GM12878 (cell line): ENCODE measurements at regions of chr2 and their contacts with region 1.

Region 1: GRCh38 chr2:203225423-203226039 is 13.3 kb upstream of the CYP20A1 start:
- DNase-seq: no peak
- ATAC-seq: peak; percentile 92
- H3K4me3 ChIP-seq: no peak overlapping the region
- H3K27ac ChIP-seq: no peak overlapping the region
- H3K4me1 ChIP-seq: no peaks in the 10 kb centered on the region
- H3K27me3 ChIP-seq: no peaks in the 10 kb centered on the region
- CTCF ChIP-seq: peak; percentile 42 to 76 (median 69)
- EP300 ChIP-seq: no peak
- POLR2A ChIP-seq: no peak
- RAD21 ChIP-seq: peak; percentile 59

Region 2: DNA sequence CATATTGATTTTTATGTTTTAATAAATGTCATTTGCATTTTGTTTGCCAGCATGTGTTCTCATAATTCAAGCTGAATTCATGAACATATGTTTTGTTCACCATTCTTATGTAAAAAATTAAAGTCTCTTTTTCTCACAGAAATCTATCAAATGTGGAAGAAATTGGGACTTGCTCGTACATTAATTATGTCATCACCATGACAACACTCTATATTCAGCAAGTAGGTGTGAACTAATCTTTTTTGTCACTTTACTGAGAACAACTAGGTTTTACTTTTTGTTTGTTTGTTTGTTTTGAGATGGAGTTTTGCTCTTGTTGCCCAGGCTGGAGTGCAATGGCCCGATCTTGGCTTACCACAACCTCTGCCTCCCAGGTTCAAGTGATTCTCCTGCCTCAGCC is 169.2 kb before region 1 on chr2:
- CTCF ChIA-PET with region 1: no interaction called
- POLR2A ChIA-PET with region 1: no interaction called
- RAD21 ChIA-PET with region 1: no interaction called
- SMC1A ChIA-PET with region 1: no interaction called
- in situ Hi-C with region 1: no loop called
- intact Hi-C with region 1: no loop called
- DNase-seq: no peak
- ATAC-seq: no peak
- H3K4me3 ChIP-seq: no peak overlapping the region
- H3K27ac ChIP-seq: no peak overlapping the region
- H3K4me1 ChIP-seq: no peaks in the 10 kb centered on the region
- H3K27me3 ChIP-seq: no peaks in the 10 kb centered on the region
- CTCF ChIP-seq: no peak
- EP300 ChIP-seq: no peak
- POLR2A ChIP-seq: no peak
- RAD21 ChIP-seq: no peak

Region 3: GRCh38 chr2:203164311-203164935 is 61.1 kb before region 1 on chr2:
- CTCF ChIA-PET with region 1: no interaction called
- POLR2A ChIA-PET with region 1: no interaction called
- RAD21 ChIA-PET with region 1: no interaction called
- SMC1A ChIA-PET with region 1: no interaction called
- in situ Hi-C with region 1: no loop called
- intact Hi-C with region 1: no loop called
- DNase-seq: no peak
- ATAC-seq: no peak
- H3K4me3 ChIP-seq: no peak overlapping the region
- H3K27ac ChIP-seq: no peak overlapping the region
- H3K4me1 ChIP-seq: no peaks in the 10 kb centered on the region
- H3K27me3 ChIP-seq: no peaks in the 10 kb centered on the region
- CTCF ChIP-seq: no peak
- EP300 ChIP-seq: no peak
- POLR2A ChIP-seq: no peak
- RAD21 ChIP-seq: no peak

Region 4: DNA sequence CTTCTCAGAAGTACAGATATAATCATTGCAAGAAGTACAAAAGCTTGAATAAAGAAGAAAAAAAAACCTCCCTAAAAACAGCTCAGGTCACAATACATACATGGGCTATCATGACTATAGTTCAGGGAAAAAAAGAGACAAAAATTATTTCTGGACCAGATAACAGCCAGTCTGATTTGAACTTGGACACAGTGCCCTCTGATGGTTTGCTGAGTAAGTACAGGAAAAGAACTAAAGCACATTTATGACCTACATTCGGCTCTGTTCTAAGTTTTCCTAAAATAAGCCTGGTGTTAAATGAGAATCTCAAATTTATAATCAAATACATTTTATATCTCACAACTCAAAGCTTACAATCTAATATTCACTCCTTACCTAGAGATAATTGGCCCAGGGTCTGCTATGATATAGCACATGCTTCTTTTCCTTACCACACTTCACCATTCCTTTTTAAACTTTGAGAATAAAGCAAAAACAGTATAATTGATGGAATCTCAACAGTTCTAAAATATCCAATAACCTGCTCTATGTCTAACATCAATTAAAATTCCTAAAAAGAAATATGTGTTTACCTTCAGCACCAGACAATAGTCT is 228.4 kb after region 1 on chr2:
- CTCF ChIA-PET with region 1: interaction called, 69 read pairs
- POLR2A ChIA-PET with region 1: interaction called, 5 read pairs
- RAD21 ChIA-PET with region 1: interaction called, 3 read pairs
- SMC1A ChIA-PET with region 1: interaction called, 20 read pairs
- in situ Hi-C with region 1: no loop called
- intact Hi-C with region 1: loop called (anchors 1 kb)
- DNase-seq: peak; percentile 4
- ATAC-seq: peak; percentile 86
- H3K4me3 ChIP-seq: no peak overlapping the region
- H3K27ac ChIP-seq: no peak overlapping the region
- H3K4me1 ChIP-seq: no peaks in the 10 kb centered on the region
- H3K27me3 ChIP-seq: no peaks in the 10 kb centered on the region
- CTCF ChIP-seq: peak; percentile 67 to 80 (median 73); a peak in 5 of 6 replicates
- EP300 ChIP-seq: no peak
- POLR2A ChIP-seq: no peak
- RAD21 ChIP-seq: peak; percentile 89

Region 5: DNA sequence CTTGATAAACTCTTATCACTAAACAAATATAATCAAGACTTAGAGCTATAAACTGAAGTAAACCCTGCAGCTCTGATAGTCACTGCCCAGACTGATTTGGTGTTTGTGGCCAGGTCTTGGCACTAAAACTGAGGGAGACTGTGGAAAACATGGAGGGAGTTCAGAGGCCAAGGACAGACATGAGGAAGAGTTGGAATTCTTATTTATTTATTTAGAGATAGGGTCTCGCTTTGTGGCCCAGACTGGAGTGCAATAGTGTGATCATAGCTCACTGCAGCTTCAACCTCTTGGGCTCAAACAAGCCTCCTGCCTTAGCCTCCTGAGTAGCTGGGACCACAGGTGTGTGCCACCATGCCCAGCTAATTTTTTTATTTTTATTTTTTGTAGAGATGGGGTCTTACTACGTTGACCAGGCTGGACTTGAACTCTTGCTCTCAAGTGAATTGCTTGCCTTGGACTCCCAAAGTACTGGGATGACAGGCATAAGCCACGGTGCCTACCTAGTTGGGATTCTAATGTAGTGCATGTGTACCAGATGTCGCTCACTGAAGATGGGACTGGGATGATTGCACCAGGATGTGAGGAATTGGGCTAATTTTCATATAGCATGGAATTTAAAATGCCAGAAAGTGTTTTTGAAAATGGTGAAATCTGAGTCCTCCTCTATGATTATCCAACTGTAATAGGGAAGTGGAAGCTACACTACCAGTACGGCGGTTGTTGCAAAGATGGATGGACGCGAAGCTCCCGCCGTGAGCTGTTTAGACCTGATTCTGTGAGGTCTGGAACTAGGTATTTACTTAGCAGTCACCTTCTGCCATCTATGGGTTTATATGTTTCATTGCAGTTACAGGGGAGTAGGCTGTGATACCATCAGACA is 589.4 kb after region 1 on chr2:
- CTCF ChIA-PET with region 1: interaction called, 8 read pairs
- POLR2A ChIA-PET with region 1: no interaction called
- RAD21 ChIA-PET with region 1: interaction called, 9 read pairs
- SMC1A ChIA-PET with region 1: no interaction called
- in situ Hi-C with region 1: loop called (anchors 25 kb)
- intact Hi-C with region 1: loop called (anchors 1 kb)
- DNase-seq: no peak
- ATAC-seq: peak; percentile 91
- H3K4me3 ChIP-seq: no peak overlapping the region
- H3K27ac ChIP-seq: no peak overlapping the region
- H3K4me1 ChIP-seq: peaks cover 6% of the 10 kb centered on the region
- H3K27me3 ChIP-seq: peaks cover 0 to under 1% of the 10 kb centered on the region in 2 experiments; a peak in 1 of 4 replicates
- CTCF ChIP-seq: peak; percentile 55 to 80 (median 66); a peak in 5 of 6 replicates
- EP300 ChIP-seq: no peak
- POLR2A ChIP-seq: no peak
- RAD21 ChIP-seq: peak; percentile 89